Activated naive CD4-positive, alpha-beta T cell treated with anti-CD3 and anti-CD28 coated beads for 36 hours (primary cell): ENCODE measurements at regions of chr12 and their contacts with region 1.

Region 1: GRCh38 chr12:26832822-26833742 is at the start of gene ITPR2:
- DNase-seq: peak; percentile 95
- H3K4me3 Mint-ChIP-seq: peak within 1 kb of the TSS; percentile 99
- H3K27ac Mint-ChIP-seq: peak within 1 kb of the TSS; percentile 97
- H3K4me1 Mint-ChIP-seq: peaks cover 30% of the 10 kb centered on the region
- H3K27me3 Mint-ChIP-seq: no peaks in the 10 kb centered on the region
- total RNA-seq, gene ITPR2: 24.4 to 24.5 TPM

Region 2: DNA sequence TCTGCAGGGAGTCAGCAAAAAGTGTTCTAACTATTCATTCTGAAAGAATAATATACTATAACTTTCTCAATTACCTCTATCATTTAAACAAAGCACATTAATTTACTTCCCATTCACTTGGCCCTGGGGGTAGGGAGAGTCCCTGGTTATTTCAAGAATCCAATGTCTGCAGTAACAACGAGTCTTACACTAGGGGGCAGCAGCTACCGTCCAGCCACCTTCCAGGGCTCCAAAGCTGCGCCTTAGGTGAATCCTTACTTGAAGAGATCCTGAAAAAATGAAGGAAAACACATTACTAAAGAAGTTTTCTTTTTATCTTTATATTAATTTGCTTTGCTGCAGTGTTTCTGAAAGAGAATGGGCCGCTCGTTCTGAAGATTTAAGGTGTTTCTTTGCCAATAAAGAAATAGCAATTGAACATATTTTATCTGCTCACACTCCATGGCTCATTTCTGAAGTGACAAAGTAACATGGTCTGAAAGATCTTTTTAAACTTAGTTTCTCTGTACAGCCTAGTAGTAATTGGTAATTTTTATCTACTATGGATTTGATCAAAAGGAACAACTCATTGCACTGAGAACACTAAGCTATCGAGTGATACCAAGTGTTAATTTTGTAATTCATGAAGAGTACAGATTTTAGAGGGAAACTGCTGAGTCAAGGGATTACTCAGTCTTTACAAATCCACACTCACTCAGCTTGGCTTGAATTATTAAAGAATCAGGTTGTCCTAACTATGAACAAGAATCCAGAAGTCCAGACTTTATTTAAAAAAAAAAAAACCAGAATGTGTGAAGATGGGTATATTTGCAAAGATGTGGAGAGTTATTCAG is 735.8 kb before region 1 on chr12:
- CTCF ChIA-PET with region 1: no interaction called
- intact Hi-C with region 1: loop called (anchors 5 kb)
- DNase-seq: peak; percentile 73
- H3K4me3 Mint-ChIP-seq: no peak overlapping the region
- H3K27ac Mint-ChIP-seq: no peak overlapping the region
- H3K4me1 Mint-ChIP-seq: no peaks in the 10 kb centered on the region
- H3K27me3 Mint-ChIP-seq: peaks cover 8% of the 10 kb centered on the region

Region 3: GRCh38 chr12:26125400-26126339 is 707.4 kb before region 1 on chr12:
- CTCF ChIA-PET with region 1: no interaction called
- intact Hi-C with region 1: loop called (anchors 2 kb)
- DNase-seq: peak; percentile 53
- H3K4me3 Mint-ChIP-seq: peak overlapping the region; percentile 82
- H3K27ac Mint-ChIP-seq: no peak overlapping the region
- H3K4me1 Mint-ChIP-seq: peaks cover 23% of the 10 kb centered on the region
- H3K27me3 Mint-ChIP-seq: peaks cover 69% of the 10 kb centered on the region

Region 4: DNA sequence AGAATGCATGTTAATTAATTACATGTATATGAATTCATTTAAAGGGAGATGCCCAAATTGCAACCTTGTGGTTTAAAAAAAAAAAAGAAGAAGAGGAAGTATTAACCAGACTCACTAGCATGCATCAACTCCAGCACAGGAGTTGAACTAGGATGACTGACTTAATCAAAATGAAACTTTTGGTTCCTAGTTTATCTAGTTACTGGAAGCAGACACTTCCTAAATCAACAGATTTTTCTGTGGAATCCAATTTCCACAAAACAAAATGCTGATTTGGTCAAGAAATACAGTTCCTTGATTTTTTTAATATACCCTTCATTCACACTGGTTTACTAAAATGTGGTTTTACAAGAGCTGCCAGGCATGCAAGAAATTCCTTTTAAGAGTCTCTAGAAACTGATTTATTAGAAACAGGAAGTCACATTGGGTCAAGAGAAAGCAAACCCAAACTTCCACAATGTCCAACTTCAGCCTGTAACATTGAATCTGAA is 41.7 kb before region 1 on chr12:
- CTCF ChIA-PET with region 1: no interaction called
- intact Hi-C with region 1: loop called (anchors 1 kb)
- DNase-seq: no peak
- H3K4me3 Mint-ChIP-seq: no peak overlapping the region
- H3K27ac Mint-ChIP-seq: no peak overlapping the region
- H3K4me1 Mint-ChIP-seq: peaks cover 34% of the 10 kb centered on the region
- H3K27me3 Mint-ChIP-seq: no peaks in the 10 kb centered on the region

Region 5: DNA sequence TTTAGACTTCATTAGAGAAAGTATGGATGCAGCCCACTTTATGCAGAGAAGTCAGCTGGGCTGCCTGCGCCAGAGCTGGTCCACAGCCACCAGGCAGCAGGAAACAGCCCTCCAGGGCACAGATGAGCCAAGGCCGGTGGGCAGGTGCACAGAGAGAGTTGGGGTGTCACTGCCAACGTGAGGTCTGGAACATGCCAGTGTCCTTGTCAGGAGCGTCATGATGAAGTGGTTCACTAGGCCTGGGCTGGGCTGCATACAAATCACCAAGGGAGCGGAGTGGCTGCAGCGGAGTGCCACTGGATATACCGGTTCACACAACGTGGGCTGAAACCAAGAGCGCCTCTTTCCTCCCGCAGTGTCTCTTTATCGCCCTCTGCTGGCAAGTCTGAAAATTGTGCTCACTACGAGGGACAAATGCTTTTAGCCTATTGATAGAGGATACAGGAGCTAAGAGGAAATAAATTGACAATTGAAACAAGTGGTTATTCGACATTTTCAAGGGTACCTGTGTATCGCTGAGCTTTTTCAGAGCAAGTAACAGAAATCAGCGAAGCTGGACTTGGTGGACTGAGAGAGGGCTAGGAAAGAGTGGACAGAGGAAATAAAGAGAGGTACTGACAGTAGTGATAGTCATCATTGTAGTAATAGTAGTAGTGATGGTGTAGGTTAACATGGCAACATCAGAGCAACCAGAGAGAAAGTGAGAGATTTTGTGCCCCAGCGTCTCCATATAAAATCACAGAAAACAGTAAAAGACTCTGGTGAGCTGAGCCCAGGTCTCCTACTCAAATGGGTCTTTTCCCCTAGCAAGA is 51.9 kb after region 1 on chr12:
- CTCF ChIA-PET with region 1: interaction called, 11 read pairs
- intact Hi-C with region 1: loop called (anchors 1 kb)
- DNase-seq: peak; percentile 92
- H3K4me3 Mint-ChIP-seq: peak overlapping the region; percentile 58
- H3K27ac Mint-ChIP-seq: no peak overlapping the region
- H3K4me1 Mint-ChIP-seq: peaks cover 6% of the 10 kb centered on the region
- H3K27me3 Mint-ChIP-seq: peaks cover 10% of the 10 kb centered on the region

Region 6: GRCh38 chr12:26971963-26972362 is 138.9 kb after region 1 on chr12:
- CTCF ChIA-PET with region 1: no interaction called
- intact Hi-C with region 1: loop called (anchors 1 kb)
- DNase-seq: peak; percentile 92
- H3K4me3 Mint-ChIP-seq: no peak overlapping the region
- H3K27ac Mint-ChIP-seq: no peak overlapping the region
- H3K4me1 Mint-ChIP-seq: peaks cover 9% of the 10 kb centered on the region
- H3K27me3 Mint-ChIP-seq: no peaks in the 10 kb centered on the region

Region 7: GRCh38 chr12:27332407-27333301 is 499.6 kb after region 1 on chr12 and contains the start of gene BMAL2:
- CTCF ChIA-PET with region 1: no interaction called
- intact Hi-C with region 1: loop called (anchors 1 kb)
- DNase-seq: peak; percentile 44
- H3K4me3 Mint-ChIP-seq: peak within 1 kb of the TSS; percentile 90
- H3K27ac Mint-ChIP-seq: peak within 1 kb of the TSS; percentile 74
- H3K4me1 Mint-ChIP-seq: peaks cover 34% of the 10 kb centered on the region
- H3K27me3 Mint-ChIP-seq: peaks cover 30% of the 10 kb centered on the region
- total RNA-seq, gene BMAL2: 7.9 to 9.2 TPM